Activated T-helper 1 cell treated with anti-CD3 and anti-CD28 coated beads, Interleukin-12 subunit alpha, Interleukin-12 subunit beta, Interleukin-2, Interleukin-4 antibody, amounts not matched to agents 30 ng/mL and 10 ng/mL and 1 ng/mL, durations not matched to agents 14 hours and 24 hours and 36 hours (primary cell): ENCODE measurements at regions of chr18 and their contacts with region 1.

Region 1: GRCh38 chr18:45690975-45691815 is 32.8 kb upstream of the SLC14A1 start:
- DNase-seq: peak; percentile 55
- H3K4me3 Mint-ChIP-seq: no peak overlapping the region
- H3K27ac Mint-ChIP-seq: no peak overlapping the region
- H3K4me1 Mint-ChIP-seq: peaks cover 31% of the 10 kb centered on the region
- H3K27me3 Mint-ChIP-seq: peaks cover 44% of the 10 kb centered on the region

Region 2: GRCh38 chr18:45335282-45336043 is 355.7 kb before region 1 on chr18:
- intact Hi-C with region 1: no loop called
- DNase-seq: no peak
- H3K4me3 Mint-ChIP-seq: no peak overlapping the region
- H3K27ac Mint-ChIP-seq: no peak overlapping the region
- H3K4me1 Mint-ChIP-seq: no peaks in the 10 kb centered on the region
- H3K27me3 Mint-ChIP-seq: peaks cover 6% of the 10 kb centered on the region

Region 3: GRCh38 chr18:45402485-45403056 is 288.6 kb before region 1 on chr18:
- intact Hi-C with region 1: no loop called
- DNase-seq: no peak
- H3K4me3 Mint-ChIP-seq: no peak overlapping the region
- H3K27ac Mint-ChIP-seq: no peak overlapping the region
- H3K4me1 Mint-ChIP-seq: no peaks in the 10 kb centered on the region
- H3K27me3 Mint-ChIP-seq: peaks cover 3% of the 10 kb centered on the region

Region 4: GRCh38 chr18:45664824-45665763 is 26.1 kb before region 1 on chr18:
- intact Hi-C with region 1: loop called (anchors 1 kb)
- DNase-seq: peak; percentile 44
- H3K4me3 Mint-ChIP-seq: no peak overlapping the region
- H3K27ac Mint-ChIP-seq: no peak overlapping the region
- H3K4me1 Mint-ChIP-seq: peaks cover 52% of the 10 kb centered on the region
- H3K27me3 Mint-ChIP-seq: peaks cover 12% of the 10 kb centered on the region

Region 5: DNA sequence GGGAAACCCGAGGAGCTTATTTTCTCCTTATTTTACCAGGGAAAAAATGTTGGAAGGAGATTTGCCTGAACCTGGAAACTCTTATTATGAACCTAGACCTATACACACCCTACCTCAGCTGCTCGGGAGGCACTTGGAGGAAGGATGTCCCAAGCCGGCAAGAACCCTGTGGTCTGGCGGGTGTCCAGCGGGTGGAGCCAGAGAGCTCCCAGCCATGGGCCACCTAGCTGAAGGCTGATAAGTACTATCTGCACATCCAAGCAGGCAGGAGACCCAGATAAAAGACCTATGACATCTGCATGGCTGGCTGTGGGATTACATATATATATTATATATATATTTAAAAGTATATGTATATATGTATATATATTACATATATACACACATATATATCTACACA is 31.7 kb after region 1 on chr18:
- intact Hi-C with region 1: loop called (anchors 2 kb)
- DNase-seq: peak; percentile 54
- H3K4me3 Mint-ChIP-seq: no peak overlapping the region
- H3K27ac Mint-ChIP-seq: no peak overlapping the region
- H3K4me1 Mint-ChIP-seq: no peaks in the 10 kb centered on the region
- H3K27me3 Mint-ChIP-seq: peaks cover 21% of the 10 kb centered on the region

Region 6: GRCh38 chr18:45839414-45840395 is 148.5 kb after region 1 on chr18:
- intact Hi-C with region 1: loop called (anchors 2 kb)
- DNase-seq: no peak
- H3K4me3 Mint-ChIP-seq: no peak overlapping the region
- H3K27ac Mint-ChIP-seq: no peak overlapping the region
- H3K4me1 Mint-ChIP-seq: no peaks in the 10 kb centered on the region
- H3K27me3 Mint-ChIP-seq: peaks cover 43% of the 10 kb centered on the region

Region 7: GRCh38 chr18:45879681-45880655 is 188.8 kb after region 1 on chr18:
- intact Hi-C with region 1: loop called (anchors 1 kb)
- DNase-seq: peak; percentile 64
- H3K4me3 Mint-ChIP-seq: no peak overlapping the region
- H3K27ac Mint-ChIP-seq: no peak overlapping the region
- H3K4me1 Mint-ChIP-seq: peaks cover 14% of the 10 kb centered on the region
- H3K27me3 Mint-ChIP-seq: no peaks in the 10 kb centered on the region

Region 8: GRCh38 chr18:45967007-45967706 is 276.0 kb after region 1 on chr18 and contains the start of gene EPG5:
- intact Hi-C with region 1: loop called (anchors 2 kb)
- DNase-seq: peak; percentile 93
- H3K4me3 Mint-ChIP-seq: peak within 1 kb of the TSS; percentile 97
- H3K27ac Mint-ChIP-seq: peak within 1 kb of the TSS; percentile 91
- H3K4me1 Mint-ChIP-seq: peaks cover 38% of the 10 kb centered on the region
- H3K27me3 Mint-ChIP-seq: peaks cover 2% of the 10 kb centered on the region
- total RNA-seq, gene EPG5: 14.3 and 14.6 TPM in 2 replicates